Sigmoid colon (tissue), 7 donors: ENCODE measurements at regions of chr18 and their contacts with region 1.

Region 1: DNA sequence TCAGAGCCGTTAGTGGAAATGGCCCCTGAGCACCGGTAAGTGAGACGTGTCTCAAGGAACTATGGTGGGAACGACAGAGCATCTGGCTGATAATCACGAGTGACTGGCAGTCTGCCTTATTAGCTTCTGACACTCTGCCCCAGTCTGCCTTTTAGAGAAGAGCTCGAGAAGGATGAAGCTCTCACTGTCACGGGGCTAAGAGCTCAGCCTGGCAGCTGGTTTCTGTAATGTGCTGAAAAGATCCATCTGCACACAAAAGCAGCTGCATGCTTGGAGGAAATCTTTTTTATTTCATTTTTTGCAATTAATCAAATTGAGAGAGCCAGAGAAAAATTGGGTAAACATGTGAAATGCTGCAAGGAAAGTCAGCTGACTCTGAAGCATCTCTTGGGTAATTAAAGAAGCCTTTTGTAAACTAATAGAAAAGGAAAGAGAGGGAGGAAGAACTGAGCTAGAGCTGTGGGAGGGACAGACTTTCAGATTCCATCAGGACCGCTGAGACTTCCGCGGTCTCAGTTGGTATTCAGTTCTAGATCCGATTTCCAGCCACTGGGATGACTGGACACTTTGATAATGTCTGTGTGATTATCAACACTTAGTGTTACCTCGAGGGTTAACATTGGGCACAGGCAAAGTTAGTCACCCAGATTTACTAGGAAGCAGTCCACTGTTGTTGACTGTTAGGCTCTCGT is 24.4 kb downstream of the MBP start:
- DNase-seq: peak; percentile 91
- H3K4me3 ChIP-seq: peak overlapping the region in 1 of 4 donors; percentile 13
- H3K27ac ChIP-seq: peak overlapping the region; percentile 53 to 74 (median 68)
- H3K4me1 ChIP-seq: peaks cover 0 to 29% (median 25%) of the 10 kb centered on the region in 4 donors
- H3K27me3 ChIP-seq: no peaks in the 10 kb centered on the region
- CTCF ChIP-seq: no peak
- EP300 ChIP-seq: peak in 3 of 4 donors; percentile 5 to 50 (median 23)
- POLR2A ChIP-seq: no peak

Region 2: GRCh38 chr18:77054606-77055428 is 53.3 kb before region 1 on chr18:
- intact Hi-C with region 1: loop called (anchors 5 kb)
- DNase-seq: peak; percentile 90
- H3K4me3 ChIP-seq: no peak overlapping the region
- H3K27ac ChIP-seq: peak overlapping the region; percentile 57 to 75 (median 66)
- H3K4me1 ChIP-seq: peaks cover 0 to 48% (median 19%) of the 10 kb centered on the region in 4 donors
- H3K27me3 ChIP-seq: no peaks in the 10 kb centered on the region
- CTCF ChIP-seq: peak in 1 of 4 experiments; percentile 17
- EP300 ChIP-seq: no peak
- POLR2A ChIP-seq: no peak